SK-N-SH (cell line): ENCODE measurements at regions of chr10 and their contacts with region 1.

Region 1: DNA sequence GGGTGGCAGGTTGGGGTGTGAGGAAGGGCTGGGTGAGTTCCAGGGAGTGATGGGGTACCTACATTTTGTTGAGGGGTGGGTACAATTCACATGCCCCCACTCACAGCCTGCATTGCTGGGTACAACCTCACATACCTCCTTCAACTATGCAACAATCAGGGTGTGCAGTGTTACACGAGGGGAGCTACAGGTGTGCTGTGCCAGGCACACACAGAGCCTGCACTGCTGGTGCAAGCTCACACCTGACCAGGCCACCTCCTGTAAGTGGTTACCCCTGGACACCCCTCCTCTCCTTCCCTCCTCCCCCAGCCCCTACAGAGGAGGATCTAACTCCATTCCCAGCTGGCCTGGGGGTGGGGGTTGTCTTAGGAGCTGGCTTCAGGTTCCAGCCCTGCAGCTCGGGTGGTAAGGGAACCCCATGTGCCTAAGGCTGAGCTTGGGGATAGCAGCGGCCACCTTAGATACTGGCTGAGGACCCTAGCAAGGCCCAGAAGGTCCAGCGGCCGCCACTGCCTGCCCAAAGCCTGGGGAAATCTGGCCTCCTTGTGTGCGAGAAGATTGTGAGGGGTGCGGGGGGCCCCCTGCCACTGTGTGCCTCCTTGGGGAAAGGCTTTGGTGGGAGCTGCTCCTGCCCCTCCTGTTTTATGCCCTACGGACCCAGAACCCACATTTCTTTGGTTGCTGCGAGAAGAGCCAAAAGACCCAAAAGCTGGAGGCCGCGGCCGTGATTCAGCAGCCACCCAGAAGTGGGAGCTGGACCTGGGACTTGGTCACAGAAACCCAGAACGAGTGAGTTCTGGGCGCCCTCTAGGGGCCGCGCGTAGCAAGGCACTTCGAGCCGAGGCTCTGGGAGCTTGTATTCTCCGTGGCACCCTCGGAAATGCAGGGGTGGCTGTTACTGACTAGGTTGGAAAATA is 10.8 kb downstream of the TLX1 start:
- DNase-seq: peak; percentile 92
- H3K4me3 ChIP-seq: peak overlapping the region in 1 of 2 experiments; percentile 41; a peak in 1 of 4 replicates
- H3K27ac ChIP-seq: no peak overlapping the region
- H3K4me1 ChIP-seq: peaks cover 0 to 3% of the 10 kb centered on the region in 2 experiments; a peak in 1 of 4 replicates
- H3K27me3 ChIP-seq: peaks cover 26% of the 10 kb centered on the region
- CTCF ChIP-seq: peak; percentile 98
- EP300 ChIP-seq: no peak
- RAD21 ChIP-seq: peak; percentile 95

Region 2: GRCh38 chr10:100945754-100946153 is 196.1 kb before region 1 on chr10:
- CTCF ChIA-PET with region 1: no interaction called
- POLR2A ChIA-PET with region 1: no interaction called
- DNase-seq: no peak
- H3K4me3 ChIP-seq: no peak overlapping the region
- H3K27ac ChIP-seq: no peak overlapping the region
- H3K4me1 ChIP-seq: no peaks in the 10 kb centered on the region
- H3K27me3 ChIP-seq: no peaks in the 10 kb centered on the region
- CTCF ChIP-seq: no peak
- EP300 ChIP-seq: no peak
- RAD21 ChIP-seq: no peak

Region 3: GRCh38 chr10:101012525-101013364 is 129.1 kb before region 1 on chr10:
- CTCF ChIA-PET with region 1: interaction called, 27 read pairs
- POLR2A ChIA-PET with region 1: no interaction called
- DNase-seq: peak; percentile 91
- H3K4me3 ChIP-seq: no peak overlapping the region
- H3K27ac ChIP-seq: peak overlapping the region; percentile 18 to 76; a peak in 3 of 4 replicates
- H3K4me1 ChIP-seq: peaks cover 8 to 26% of the 10 kb centered on the region in 2 experiments; a peak in 3 of 4 replicates
- H3K27me3 ChIP-seq: no peaks in the 10 kb centered on the region
- CTCF ChIP-seq: peak; percentile 97
- EP300 ChIP-seq: no peak
- RAD21 ChIP-seq: peak; percentile 77

Region 4: GRCh38 chr10:101042667-101043355 is 99.1 kb before region 1 on chr10:
- CTCF ChIA-PET with region 1: interaction called, 42 read pairs
- POLR2A ChIA-PET with region 1: interaction called, 5 read pairs
- DNase-seq: peak; percentile 91
- H3K4me3 ChIP-seq: peak overlapping the region; percentile 53 to 68
- H3K27ac ChIP-seq: peak overlapping the region; percentile 91 to 97
- H3K4me1 ChIP-seq: peaks cover 10 to 18% of the 10 kb centered on the region in 2 experiments
- H3K27me3 ChIP-seq: no peaks in the 10 kb centered on the region
- CTCF ChIP-seq: no peak
- EP300 ChIP-seq: no peak
- RAD21 ChIP-seq: no peak

Region 5: GRCh38 chr10:101060036-101060950 is 81.6 kb before region 1 on chr10:
- CTCF ChIA-PET with region 1: interaction called, 234 read pairs
- POLR2A ChIA-PET with region 1: interaction called, 3 read pairs
- DNase-seq: peak; percentile 73
- H3K4me3 ChIP-seq: peak overlapping the region; percentile 83 to 100
- H3K27ac ChIP-seq: peak overlapping the region; percentile 97 to 98
- H3K4me1 ChIP-seq: peaks cover 19 to 23% of the 10 kb centered on the region in 2 experiments; a peak in 3 of 4 replicates
- H3K27me3 ChIP-seq: no peaks in the 10 kb centered on the region
- CTCF ChIP-seq: peak; percentile 96
- EP300 ChIP-seq: no peak
- RAD21 ChIP-seq: peak; percentile 85

Region 6: GRCh38 chr10:101110856-101111546 is 30.9 kb before region 1 on chr10:
- CTCF ChIA-PET with region 1: interaction called, 36 read pairs
- POLR2A ChIA-PET with region 1: no interaction called
- DNase-seq: no peak
- H3K4me3 ChIP-seq: no peak overlapping the region
- H3K27ac ChIP-seq: no peak overlapping the region
- H3K4me1 ChIP-seq: peaks cover 0 to 12% of the 10 kb centered on the region in 2 experiments; a peak in 1 of 4 replicates
- H3K27me3 ChIP-seq: peaks cover 34% of the 10 kb centered on the region
- CTCF ChIP-seq: no peak
- EP300 ChIP-seq: no peak
- RAD21 ChIP-seq: no peak

Region 7: GRCh38 chr10:101130984-101131961 is 10.6 kb before region 1 on chr10 and contains the start of gene TLX1:
- CTCF ChIA-PET with region 1: interaction called, 90 read pairs
- POLR2A ChIA-PET with region 1: no interaction called
- DNase-seq: peak; percentile 80
- H3K4me3 ChIP-seq: peak within 1 kb of the TSS; percentile 33 to 51; a peak in 3 of 4 replicates
- H3K27ac ChIP-seq: no peak within 1 kb of the TSS
- H3K4me1 ChIP-seq: peaks cover 0 to 2% of the 10 kb centered on the region in 2 experiments; a peak in 1 of 4 replicates
- H3K27me3 ChIP-seq: peaks cover 86% of the 10 kb centered on the region
- CTCF ChIP-seq: no peak
- EP300 ChIP-seq: no peak
- RAD21 ChIP-seq: no peak
- polyA plus RNA-seq, gene TLX1: 0.02 TPM in 1 of 2 replicates, not detected in the other

Region 8: DNA sequence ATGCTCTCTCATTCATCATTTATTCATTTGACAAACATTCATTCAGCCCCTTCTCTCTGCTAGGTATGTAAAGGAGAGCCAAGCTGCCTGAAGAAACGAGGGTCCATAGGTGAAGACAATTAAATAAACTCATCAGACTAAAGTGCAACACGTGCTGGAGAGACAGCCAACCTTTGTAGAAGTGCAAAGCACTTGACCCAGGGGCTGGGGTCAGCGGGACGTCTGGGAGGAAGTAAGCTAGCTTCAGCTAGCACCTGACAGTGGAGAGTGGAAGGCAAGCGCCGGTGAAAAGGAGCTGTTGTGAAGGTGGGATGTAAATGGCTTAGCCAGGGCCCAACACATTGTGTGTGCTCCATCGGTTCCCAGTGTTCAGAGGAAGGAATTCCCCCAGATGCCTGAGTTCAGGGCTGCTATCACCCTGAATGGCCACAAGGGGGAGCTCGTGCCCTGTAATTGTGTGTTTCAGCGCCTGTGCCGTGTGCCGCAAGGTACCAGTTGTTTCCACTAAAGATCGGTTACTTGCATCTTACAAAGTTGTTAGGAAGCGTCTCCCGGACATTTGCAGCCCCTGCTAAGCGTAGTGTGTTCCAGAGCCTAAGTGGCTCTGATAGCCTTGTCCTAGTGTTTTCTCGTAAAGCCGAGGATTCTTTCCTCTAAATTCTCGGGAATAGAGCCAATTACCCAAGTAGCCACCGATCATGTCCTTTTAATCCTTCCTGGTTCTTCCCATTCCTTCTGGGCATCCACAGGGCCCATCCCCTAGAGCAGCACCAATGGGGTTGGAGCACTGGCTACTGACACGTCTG is 19.8 kb after region 1 on chr10:
- CTCF ChIA-PET with region 1: interaction called, 95 read pairs
- POLR2A ChIA-PET with region 1: no interaction called
- DNase-seq: peak; percentile 77
- H3K4me3 ChIP-seq: peak overlapping the region; percentile 48 to 64
- H3K27ac ChIP-seq: no peak overlapping the region
- H3K4me1 ChIP-seq: peaks cover 0 to 10% of the 10 kb centered on the region in 2 experiments; a peak in 1 of 4 replicates
- H3K27me3 ChIP-seq: peaks cover 33% of the 10 kb centered on the region
- CTCF ChIP-seq: peak; percentile 96
- EP300 ChIP-seq: no peak
- RAD21 ChIP-seq: peak; percentile 85